Dendritic cell treated with granulocyte-macrophage colony-stimulating factor and Interleukin-4, amounts not matched to agents 40 ng/mL and 50 ng/mL, for 4 days (primary cell): ENCODE measurements at regions of chr3 and their contacts with region 1.

Region 1: DNA sequence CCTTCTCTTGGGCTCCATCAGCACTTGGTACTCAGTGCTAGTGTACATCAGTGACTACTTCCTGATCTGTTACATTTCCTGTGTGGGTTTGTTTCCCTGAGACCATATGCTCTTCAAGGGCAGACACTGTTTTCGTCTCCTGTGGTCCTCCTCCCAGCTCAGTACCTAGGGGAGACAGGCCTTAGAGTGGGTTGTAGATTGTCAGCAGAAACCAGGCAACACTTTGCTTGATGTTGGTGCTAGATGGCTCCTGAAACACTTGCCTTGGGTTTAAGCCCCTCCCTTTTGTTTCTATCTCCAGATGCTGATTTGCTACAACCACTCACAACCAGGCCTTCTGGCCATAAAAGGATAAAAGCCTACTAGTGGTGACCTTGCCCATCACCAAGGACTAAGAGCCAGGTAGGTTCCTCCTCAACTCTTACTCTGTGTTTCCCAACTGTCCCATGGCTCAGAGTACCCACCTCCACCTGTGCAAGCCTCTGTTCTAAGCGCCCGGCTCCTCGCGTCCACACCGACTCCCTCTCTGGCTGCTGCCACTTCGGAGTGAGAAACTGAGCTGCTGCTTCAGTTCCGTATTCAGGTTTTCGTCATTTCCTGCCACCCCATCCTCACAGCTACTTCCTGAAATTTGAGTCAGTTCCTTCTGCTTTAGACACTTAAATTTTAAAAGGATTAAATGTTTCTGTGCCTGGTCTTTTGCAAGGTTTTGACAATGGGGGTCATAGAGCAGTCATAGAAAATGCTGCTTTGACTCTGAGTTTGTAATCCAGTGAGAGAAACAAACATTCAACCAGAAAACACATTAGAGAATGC is at the start of gene HCLS1:
- H3K4me3 Mint-ChIP-seq: peak within 1 kb of the TSS; percentile 89
- H3K27ac Mint-ChIP-seq: peak within 1 kb of the TSS; percentile 98
- H3K4me1 Mint-ChIP-seq: peaks cover 70% of the 10 kb centered on the region
- H3K27me3 Mint-ChIP-seq: no peaks in the 10 kb centered on the region

Region 2: DNA sequence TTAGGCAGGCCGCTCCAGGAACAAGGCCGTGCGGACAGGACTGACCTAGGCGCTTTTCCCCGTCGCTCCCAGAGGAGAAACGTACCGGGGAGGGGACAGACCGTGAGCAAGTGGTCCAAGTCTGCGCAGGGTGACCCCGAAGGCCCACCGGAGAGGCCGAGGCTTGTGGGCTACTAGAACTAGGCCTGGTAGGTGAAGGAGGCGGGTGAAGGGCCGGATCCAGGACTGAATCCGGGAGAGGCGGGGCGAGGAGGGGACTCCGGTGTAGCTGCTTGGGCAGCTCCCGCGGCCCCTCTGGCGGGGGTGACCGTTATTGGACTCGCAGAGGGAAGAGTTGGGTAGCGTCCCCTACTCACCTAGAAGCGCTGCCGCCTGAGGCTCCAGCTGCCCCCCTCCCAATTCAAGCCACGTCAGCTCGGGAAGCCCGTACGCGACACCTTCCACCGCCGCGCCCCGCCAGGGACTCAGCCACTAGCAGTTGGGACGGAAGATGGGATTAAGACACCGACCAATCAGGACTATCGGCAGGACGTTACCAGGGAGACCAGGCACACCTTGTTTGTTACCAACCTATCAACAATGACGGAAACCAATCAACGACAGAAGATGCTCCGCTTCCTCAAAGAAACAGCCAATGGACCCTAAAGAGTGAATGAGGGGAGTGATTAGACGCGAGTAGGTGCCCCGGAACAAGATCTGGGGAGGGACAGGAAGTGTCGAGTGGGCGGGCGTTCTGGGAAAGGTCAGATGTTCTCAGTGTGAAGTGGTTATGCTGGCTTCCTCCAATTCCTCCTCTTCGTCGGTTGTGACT is 88.9 kb after region 1 on chr3 and contains the start of gene GOLGB1:
- intact Hi-C with region 1: loop called (anchors 2 kb)
- H3K4me3 Mint-ChIP-seq: no peak within 1 kb of the TSS
- H3K27ac Mint-ChIP-seq: no peak within 1 kb of the TSS
- H3K4me1 Mint-ChIP-seq: peaks cover 7% of the 10 kb centered on the region
- H3K27me3 Mint-ChIP-seq: peaks cover 10% of the 10 kb centered on the region